Naive thymus-derived CD4-positive, alpha-beta T cell (primary cell): ENCODE measurements at regions of chr17 and their contacts with region 1.

Region 1: GRCh38 chr17:77429919-77430752 is 289.4 kb downstream of the SEC14L1 start:
- DNase-seq: peak; percentile 67 to 87 (median 78)
- ATAC-seq: peak; percentile 64
- H3K4me3 ChIP-seq: no peak overlapping the region
- H3K4me3 Mint-ChIP-seq: peak overlapping the region; percentile 17 to 98 (median 51)
- H3K27ac ChIP-seq: peak overlapping the region; percentile 64
- H3K27ac Mint-ChIP-seq: peak overlapping the region; percentile 80 to 100 (median 95)
- H3K4me1 ChIP-seq: peaks cover 68 to 98% of the 10 kb centered on the region in 2 donors
- H3K4me1 Mint-ChIP-seq: peaks cover 51 to 96% (median 82%) of the 10 kb centered on the region in 7 donors
- H3K27me3 ChIP-seq: no peaks in the 10 kb centered on the region
- H3K27me3 Mint-ChIP-seq: no peaks in the 10 kb centered on the region

Region 2: GRCh38 chr17:77404812-77405581 is 25.1 kb before region 1 on chr17:
- CTCF ChIA-PET with region 1: interaction called, 114 read pairs
- POLR2A ChIA-PET with region 1: interaction called, 3,353 read pairs
- intact Hi-C with region 1: loop called in 1 of 2 experiments (anchors 1 kb)
- DNase-seq: peak; percentile 48 to 86 (median 84)
- ATAC-seq: peak; percentile 88
- H3K4me3 ChIP-seq: peak overlapping the region; percentile 66
- H3K4me3 Mint-ChIP-seq: peak overlapping the region; percentile 83 to 100 (median 95)
- H3K27ac ChIP-seq: peak overlapping the region; percentile 81
- H3K27ac Mint-ChIP-seq: peak overlapping the region; percentile 95 to 100 (median 97)
- H3K4me1 ChIP-seq: peaks cover 89 to 91% of the 10 kb centered on the region in 2 donors
- H3K4me1 Mint-ChIP-seq: peaks cover 71 to 97% (median 87%) of the 10 kb centered on the region in 7 donors
- H3K27me3 ChIP-seq: no peaks in the 10 kb centered on the region
- H3K27me3 Mint-ChIP-seq: no peaks in the 10 kb centered on the region

Region 3: GRCh38 chr17:77451245-77451893 is 21.2 kb after region 1 on chr17:
- CTCF ChIA-PET with region 1: interaction called, 17 read pairs
- POLR2A ChIA-PET with region 1: interaction called, 3,353 read pairs
- intact Hi-C with region 1: loop called (anchors 1 to 2 kb)
- DNase-seq: peak in 8 of 9 donors; percentile 64 to 82 (median 74)
- ATAC-seq: peak; percentile 75
- H3K4me3 ChIP-seq: peak overlapping the region; percentile 77
- H3K4me3 Mint-ChIP-seq: peak overlapping the region; percentile 92 to 100 (median 98)
- H3K27ac ChIP-seq: peak overlapping the region; percentile 92
- H3K27ac Mint-ChIP-seq: peak overlapping the region; percentile 93 to 100 (median 98)
- H3K4me1 ChIP-seq: peaks cover 31 to 40% of the 10 kb centered on the region in 2 donors
- H3K4me1 Mint-ChIP-seq: peaks cover 31 to 73% (median 37%) of the 10 kb centered on the region in 7 donors
- H3K27me3 ChIP-seq: no peaks in the 10 kb centered on the region
- H3K27me3 Mint-ChIP-seq: no peaks in the 10 kb centered on the region

Region 4: DNA sequence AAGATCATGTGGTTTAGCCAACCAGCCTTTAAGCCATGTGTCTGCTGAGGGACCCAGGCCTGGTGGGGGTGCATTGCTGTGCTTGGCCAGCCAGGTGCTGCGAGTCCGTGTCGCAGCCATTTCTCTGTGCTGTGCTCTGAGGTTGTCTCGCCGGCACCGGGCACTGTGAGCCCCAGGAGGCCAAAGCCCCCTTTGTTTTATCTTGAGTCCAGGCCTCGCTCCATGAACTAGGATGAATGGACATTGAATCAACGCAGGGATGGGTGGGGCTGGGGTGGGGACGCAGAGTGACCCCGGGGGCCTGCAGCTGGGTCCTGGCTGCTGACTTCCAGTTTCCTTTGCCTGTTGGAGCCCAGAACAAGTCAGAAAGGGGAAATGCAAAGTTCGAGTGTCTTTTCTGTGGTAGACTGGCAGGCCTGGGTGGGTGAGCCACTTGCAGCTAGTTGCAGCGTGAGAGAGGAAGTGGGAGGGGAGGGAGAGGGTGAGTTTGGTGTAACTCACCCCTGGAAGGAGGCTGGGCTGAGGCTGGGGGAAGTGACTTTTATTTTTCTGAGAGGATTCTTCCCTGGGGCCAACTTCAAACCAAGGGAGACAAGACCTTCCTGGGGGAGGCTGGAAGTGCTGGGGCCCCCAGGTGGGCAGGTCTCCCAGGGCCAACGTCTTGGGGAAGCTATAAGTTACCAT is 35.4 kb after region 1 on chr17:
- CTCF ChIA-PET with region 1: interaction called, 8 read pairs
- POLR2A ChIA-PET with region 1: interaction called, 678 read pairs
- intact Hi-C with region 1: loop called (anchors 1 to 5 kb)
- DNase-seq: peak in 8 of 9 donors; percentile 67 to 89 (median 87)
- ATAC-seq: peak; percentile 97
- H3K4me3 ChIP-seq: peak overlapping the region; percentile 54
- H3K4me3 Mint-ChIP-seq: peak overlapping the region; percentile 79 to 87 (median 84)
- H3K27ac ChIP-seq: peak overlapping the region; percentile 64
- H3K27ac Mint-ChIP-seq: peak overlapping the region; percentile 88 to 100 (median 94)
- H3K4me1 ChIP-seq: peaks cover 88 to 90% of the 10 kb centered on the region in 2 donors
- H3K4me1 Mint-ChIP-seq: peaks cover 74 to 96% (median 86%) of the 10 kb centered on the region in 7 donors
- H3K27me3 ChIP-seq: no peaks in the 10 kb centered on the region
- H3K27me3 Mint-ChIP-seq: no peaks in the 10 kb centered on the region

Region 5: DNA sequence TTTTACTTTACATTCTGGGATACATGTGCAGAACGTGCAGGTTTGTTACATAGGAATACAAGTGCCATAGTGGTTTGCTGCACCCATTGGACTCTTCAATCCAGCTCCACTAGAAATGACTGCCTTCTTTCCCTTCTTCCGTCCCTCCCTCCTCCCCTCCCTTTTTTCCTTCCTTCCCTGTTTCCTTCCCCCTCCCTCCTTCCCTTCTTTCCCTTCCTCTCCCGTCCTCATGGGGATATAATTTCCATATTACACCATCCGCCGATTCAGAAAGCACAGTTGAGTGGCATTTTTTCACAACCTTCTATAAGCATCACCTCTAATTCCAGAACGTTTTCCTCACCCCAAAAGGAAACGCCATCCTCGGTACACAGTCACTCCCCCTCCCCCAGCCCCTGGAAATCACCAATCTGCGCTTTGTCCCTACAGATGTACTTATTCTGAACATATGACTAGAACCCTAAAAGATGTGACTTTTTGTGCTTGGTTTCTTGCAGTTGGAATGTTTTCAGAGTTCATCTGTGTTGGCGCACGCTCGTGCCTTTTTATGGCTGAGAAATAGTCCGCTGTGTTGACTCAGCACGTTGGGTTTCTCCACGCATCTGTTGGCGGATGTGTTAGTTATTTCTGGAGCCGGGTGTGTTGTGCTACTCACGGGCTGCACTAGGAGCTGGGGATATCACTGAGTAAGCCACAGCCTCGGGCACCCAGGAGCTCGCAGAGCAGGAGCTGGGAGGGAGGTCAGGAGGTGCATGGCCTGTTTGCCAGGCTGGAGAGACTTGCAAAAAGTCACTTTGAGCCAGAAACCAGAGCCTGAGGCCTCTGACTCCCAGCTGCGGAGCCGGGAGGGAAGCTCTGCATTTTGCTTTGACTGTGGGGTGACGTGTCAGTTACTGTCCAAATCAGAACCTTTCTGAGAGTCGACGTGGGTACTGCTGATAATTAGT is 47.1 kb after region 1 on chr17:
- CTCF ChIA-PET with region 1: interaction called, 13 read pairs
- POLR2A ChIA-PET with region 1: interaction called, 79 read pairs
- intact Hi-C with region 1: no loop called
- DNase-seq: peak in 1 of 9 donors; percentile 23
- ATAC-seq: no peak
- H3K4me3 ChIP-seq: no peak overlapping the region
- H3K4me3 Mint-ChIP-seq: peak overlapping the region; percentile 20 to 85 (median 54)
- H3K27ac ChIP-seq: peak overlapping the region; percentile 71
- H3K27ac Mint-ChIP-seq: peak overlapping the region; percentile 62 to 97 (median 94)
- H3K4me1 ChIP-seq: peaks cover 61 to 82% of the 10 kb centered on the region in 2 donors
- H3K4me1 Mint-ChIP-seq: peaks cover 60 to 92% (median 73%) of the 10 kb centered on the region in 7 donors
- H3K27me3 ChIP-seq: no peaks in the 10 kb centered on the region
- H3K27me3 Mint-ChIP-seq: no peaks in the 10 kb centered on the region

Region 6: GRCh38 chr17:78013683-78014467 is 583.7 kb after region 1 on chr17:
- CTCF ChIA-PET with region 1: no interaction called
- POLR2A ChIA-PET with region 1: interaction called, 3 read pairs
- intact Hi-C with region 1: loop called in 1 of 2 experiments (anchors 5 kb)
- DNase-seq: peak in 7 of 9 donors; percentile 39 to 68 (median 61)
- ATAC-seq: peak; percentile 77
- H3K4me3 ChIP-seq: no peak overlapping the region
- H3K4me3 Mint-ChIP-seq: no peak overlapping the region
- H3K27ac ChIP-seq: no peak overlapping the region
- H3K27ac Mint-ChIP-seq: peak overlapping the region in 5 of 9 donors; percentile 3 to 64 (median 18)
- H3K4me1 ChIP-seq: peaks cover 0 to 3% of the 10 kb centered on the region in 2 donors
- H3K4me1 Mint-ChIP-seq: peaks cover 18 to 58% (median 43%) of the 10 kb centered on the region in 7 donors
- H3K27me3 ChIP-seq: no peaks in the 10 kb centered on the region
- H3K27me3 Mint-ChIP-seq: no peaks in the 10 kb centered on the region

Region 7: GRCh38 chr17:78046923-78047322 is 616.8 kb after region 1 on chr17:
- CTCF ChIA-PET with region 1: no interaction called
- POLR2A ChIA-PET with region 1: no interaction called
- intact Hi-C with region 1: no loop called
- DNase-seq: no peak
- ATAC-seq: no peak
- H3K4me3 ChIP-seq: no peak overlapping the region
- H3K4me3 Mint-ChIP-seq: peak overlapping the region in 2 of 10 donors; percentile 4 to 9
- H3K27ac ChIP-seq: no peak overlapping the region
- H3K27ac Mint-ChIP-seq: peak overlapping the region in 2 of 9 donors; percentile 14 to 74
- H3K4me1 ChIP-seq: no peaks in the 10 kb centered on the region
- H3K4me1 Mint-ChIP-seq: peaks cover 10 to 82% (median 55%) of the 10 kb centered on the region in 7 donors
- H3K27me3 ChIP-seq: no peaks in the 10 kb centered on the region
- H3K27me3 Mint-ChIP-seq: no peaks in the 10 kb centered on the region